ENCODE measurements at regions of chr18 and their contacts with region 1.

Region 1: DNA sequence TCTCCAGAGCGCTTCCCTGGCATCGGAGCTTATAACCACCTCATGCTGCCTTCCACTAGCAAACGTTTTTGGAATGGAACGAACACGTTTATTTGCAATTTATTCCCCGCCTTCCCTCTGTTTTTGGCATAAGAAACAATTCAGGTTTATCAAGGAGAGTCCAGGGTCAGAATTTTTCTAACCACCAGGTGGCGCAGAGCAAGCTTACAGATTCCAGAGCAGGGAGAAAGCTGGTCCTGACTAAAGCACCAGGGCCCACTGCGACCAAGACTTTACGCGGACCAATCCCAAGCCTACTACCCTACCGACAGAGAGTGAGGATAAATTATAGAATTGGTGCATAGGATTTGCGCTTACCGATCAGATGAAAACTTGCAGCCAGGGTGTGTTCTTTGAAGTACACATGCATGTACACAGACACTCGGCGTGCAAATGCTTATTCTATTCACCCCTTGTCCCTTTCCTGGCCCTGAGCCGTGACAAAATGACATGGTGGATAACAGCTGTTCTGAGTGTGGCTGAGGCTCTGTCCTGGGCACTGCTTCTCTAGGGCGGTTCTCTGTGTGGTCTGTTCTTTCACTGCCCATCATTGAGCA is 34.7 kb downstream of the NAPG start:
- DNase-seq: no peak

Region 2: DNA sequence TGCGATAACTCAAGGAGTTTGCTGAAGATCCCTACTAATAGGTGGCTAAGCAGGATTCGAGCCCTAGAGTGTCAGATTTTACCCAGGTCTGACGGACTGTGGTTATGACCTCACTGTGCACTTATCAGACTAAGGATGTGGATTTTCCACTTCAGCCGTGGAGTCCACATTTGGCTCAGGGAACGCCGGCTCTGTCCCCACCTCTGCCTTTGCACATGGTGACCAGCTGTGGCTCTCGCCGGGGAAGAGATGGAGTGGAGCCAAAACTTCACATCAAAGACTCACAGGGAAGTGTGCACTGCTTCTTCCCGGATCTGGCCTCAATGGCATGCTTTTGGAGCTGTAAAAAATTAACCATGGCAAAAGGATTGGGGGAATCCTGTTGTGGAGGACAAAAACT is 355.4 kb before region 1 on chr18:
- intact Hi-C with region 1: no loop called
- DNase-seq: no peak

Region 3: DNA sequence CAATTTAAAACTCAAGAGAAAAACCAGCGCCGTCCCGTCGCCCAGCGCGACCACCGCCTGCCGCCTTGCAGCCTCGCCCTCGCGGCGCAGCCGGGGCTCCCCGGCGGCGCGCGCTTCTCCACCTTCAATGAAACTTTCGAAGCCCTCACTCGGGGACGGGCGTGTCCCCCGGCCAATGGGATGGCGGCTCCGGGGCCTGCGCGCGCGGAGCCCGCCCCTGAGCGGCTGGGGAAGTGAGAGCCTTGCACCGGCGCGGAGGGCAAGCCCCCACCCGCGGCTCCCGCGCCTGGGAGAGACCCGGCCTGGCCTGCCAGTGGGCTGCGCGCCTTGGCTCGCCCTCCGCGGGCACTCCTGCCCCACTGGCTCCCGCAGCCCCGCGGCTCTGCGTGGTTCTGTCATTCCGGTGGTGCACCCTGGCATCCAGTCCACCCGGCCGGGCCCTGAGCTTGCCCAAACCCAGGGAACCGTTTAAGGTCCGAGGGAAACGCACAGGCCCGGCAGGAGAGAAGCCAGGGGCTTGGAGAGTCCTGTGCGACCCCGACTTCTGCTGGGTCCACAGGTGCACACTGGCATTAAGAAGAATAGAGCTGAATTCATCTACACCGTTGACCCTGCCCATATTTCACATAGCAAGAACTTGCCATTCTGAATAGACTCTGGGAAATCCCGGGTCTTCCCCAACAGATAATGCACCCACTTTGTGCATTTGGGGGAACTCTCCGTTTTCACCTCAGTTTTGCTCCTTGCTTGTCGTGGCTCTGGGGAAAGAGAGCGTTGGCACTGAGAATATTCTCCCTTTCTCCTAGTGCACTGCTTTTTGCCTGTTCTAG is 589.1 kb after region 1 on chr18 and contains the start of gene PIEZO2:
- intact Hi-C with region 1: loop called (anchors 5 kb)
- DNase-seq: no peak
- total RNA-seq, gene PIEZO2: 0.46 TPM

Measured in cardiac septum (tissue), 1 donor.